H1 (cell line): ENCODE measurements at regions of chr19 and their contacts with region 1.

Region 1: DNA sequence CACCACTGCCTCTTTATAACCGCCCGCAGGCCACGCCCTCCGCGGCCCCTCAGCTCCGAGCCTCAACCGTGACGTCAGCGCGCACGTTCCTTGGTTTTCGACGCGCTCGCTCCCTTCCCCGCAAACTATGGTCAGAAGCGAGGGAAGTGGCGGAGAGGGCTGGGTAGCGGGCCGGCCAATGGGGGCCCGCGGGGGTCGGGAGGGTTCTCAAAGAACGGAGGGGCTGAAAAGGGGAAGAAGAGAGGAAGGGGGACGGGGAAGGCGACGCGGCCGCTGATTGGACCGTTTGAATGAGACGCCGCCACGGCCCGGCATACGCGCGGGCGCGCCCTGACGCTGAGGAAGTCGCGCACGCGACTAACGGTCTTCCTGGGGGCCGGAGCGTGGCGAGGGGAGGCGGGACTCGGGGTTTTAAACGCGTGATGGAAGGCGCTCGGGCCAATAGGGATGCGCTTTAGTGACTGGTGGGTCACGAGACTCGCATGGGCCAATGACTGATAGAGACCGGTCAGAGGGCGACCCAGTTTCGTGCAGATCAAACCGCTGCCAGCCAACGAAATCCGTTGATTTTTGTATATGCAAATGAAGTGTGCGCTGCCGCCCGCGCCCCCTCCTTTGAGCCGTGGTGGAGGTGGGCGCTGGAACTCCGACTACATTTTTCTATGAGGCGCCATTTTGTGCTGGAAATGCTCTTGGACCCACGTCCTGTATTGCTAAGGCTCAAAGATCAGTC is 378 bp upstream of the UBE2S start:
- DNase-seq: peak; percentile 96
- H3K4me3 ChIP-seq: peak overlapping the region; percentile 38 to 98 (median 72)
- H3K27ac ChIP-seq: peak overlapping the region; percentile 94
- H3K4me1 ChIP-seq: peaks cover 0 to 20% (median 13%) of the 10 kb centered on the region in 4 experiments; a peak in 6 of 7 replicates
- H3K27me3 ChIP-seq: peaks cover 0 to 4% (median 1%) of the 10 kb centered on the region in 4 experiments; a peak in 2 of 7 replicates
- CTCF ChIP-seq: no peak
- EP300 ChIP-seq: no peak
- POLR2A ChIP-seq: peak in 1 of 2 experiments; percentile 95; a peak in 2 of 3 replicates
- RAD21 ChIP-seq: peak in 1 of 2 experiments; percentile 5; a peak in 1 of 4 replicates

Region 2: DNA sequence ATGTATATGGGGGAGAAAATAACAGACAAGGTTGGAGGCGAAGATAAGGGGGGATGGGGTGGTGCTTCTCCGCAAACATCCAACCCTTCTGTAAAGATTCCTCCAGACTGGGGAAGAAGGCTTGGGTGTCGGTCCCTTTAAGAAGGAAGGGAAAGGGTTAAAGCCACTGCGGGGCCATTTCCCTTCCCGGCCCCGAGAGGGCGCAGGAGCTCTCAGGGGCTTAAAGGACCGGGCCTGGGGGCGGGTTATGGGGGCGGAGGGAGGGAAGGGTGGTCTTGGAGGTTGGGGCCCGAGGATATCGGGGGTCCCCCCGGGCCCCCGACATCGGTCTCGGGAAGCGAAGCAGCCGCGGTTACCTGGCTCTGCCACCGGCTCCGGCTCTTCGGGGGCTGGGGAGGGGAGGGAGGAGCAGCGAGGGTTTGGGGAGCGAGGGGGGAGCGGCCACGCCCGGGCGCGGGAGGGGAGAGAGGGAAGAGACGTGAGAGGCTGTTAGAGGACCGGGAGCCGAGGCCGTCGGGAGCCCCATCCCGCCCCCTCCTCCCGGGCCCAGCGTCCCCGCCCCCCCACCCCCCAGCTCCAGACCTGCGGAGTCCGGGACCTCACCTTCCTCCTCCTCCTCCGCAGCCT is 261.8 kb before region 1 on chr19:
- CTCF ChIA-PET with region 1: no interaction called
- POLR2A ChIA-PET with region 1: interaction called, 11 read pairs
- DNase-seq: peak in 1 of 2 experiments; percentile 80
- H3K4me3 ChIP-seq: peak overlapping the region; percentile 53 to 83 (median 60)
- H3K27ac ChIP-seq: no peak overlapping the region
- H3K4me1 ChIP-seq: peaks cover 6 to 24% (median 13%) of the 10 kb centered on the region in 4 experiments
- H3K27me3 ChIP-seq: no peaks in the 10 kb centered on the region
- CTCF ChIP-seq: peak; percentile 63 to 80 (median 73)
- EP300 ChIP-seq: peak in 1 of 2 experiments; percentile 36; a peak in 1 of 3 replicates
- POLR2A ChIP-seq: no peak; a peak in 1 of 3 replicates
- RAD21 ChIP-seq: peak; percentile 22 to 45; a peak in 3 of 4 replicates

Region 3: DNA sequence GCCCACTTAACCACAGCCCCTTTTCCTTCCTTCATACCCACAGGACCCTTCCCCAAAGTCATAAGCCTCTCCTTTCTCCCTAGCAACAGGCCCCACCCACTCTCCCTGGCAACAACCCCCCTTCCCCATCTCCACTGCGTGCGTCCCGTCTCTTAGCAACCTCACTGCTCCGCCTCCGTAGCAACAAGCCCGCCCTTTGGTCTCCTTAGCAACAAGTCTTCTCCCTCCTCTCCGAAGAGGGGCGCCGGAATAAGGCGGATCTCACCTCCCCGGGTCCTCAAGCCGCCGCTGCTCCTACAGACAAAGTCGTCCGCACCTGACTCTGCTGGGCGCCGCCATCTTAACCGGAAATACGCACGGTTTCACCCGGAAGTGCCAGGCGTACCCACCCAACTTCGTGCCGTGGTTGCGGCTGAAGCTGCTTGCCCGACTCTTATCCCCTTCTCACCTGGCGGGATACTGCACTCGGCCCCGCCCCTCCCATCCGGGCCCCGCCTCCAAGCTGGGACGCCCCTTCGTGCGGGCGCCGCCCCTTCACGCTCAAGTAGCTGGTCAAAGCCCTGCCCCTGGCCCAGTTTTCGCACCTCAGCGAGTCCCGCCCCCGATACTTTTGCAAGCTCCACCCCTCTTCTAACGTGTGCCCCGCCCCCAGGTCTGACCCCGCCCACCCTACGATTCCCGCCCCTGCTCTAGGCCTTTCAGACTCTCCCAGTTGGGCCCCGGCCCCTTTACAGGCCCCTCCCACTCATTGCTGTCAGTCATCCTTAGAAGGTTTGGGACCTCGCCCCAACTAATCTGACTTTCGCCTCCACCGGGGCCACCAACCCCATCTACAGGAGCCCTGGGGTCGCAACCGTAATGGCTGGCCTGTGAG is 128.0 kb before region 1 on chr19 and contains the start of gene HSPBP1:
- CTCF ChIA-PET with region 1: no interaction called
- POLR2A ChIA-PET with region 1: interaction called, 19 read pairs
- DNase-seq: peak; percentile 99
- H3K4me3 ChIP-seq: peak within 1 kb of the TSS; percentile 71 to 98 (median 90)
- H3K27ac ChIP-seq: peak within 1 kb of the TSS; percentile 85
- H3K4me1 ChIP-seq: peaks cover 3 to 19% (median 7%) of the 10 kb centered on the region in 4 experiments
- H3K27me3 ChIP-seq: no peaks in the 10 kb centered on the region
- CTCF ChIP-seq: no peak
- EP300 ChIP-seq: no peak
- POLR2A ChIP-seq: peak in 1 of 2 experiments; percentile 77; a peak in 2 of 3 replicates
- RAD21 ChIP-seq: no peak
- total RNA-seq, gene HSPBP1: 63.4 and 68.8 TPM in 2 replicates

Region 4: DNA sequence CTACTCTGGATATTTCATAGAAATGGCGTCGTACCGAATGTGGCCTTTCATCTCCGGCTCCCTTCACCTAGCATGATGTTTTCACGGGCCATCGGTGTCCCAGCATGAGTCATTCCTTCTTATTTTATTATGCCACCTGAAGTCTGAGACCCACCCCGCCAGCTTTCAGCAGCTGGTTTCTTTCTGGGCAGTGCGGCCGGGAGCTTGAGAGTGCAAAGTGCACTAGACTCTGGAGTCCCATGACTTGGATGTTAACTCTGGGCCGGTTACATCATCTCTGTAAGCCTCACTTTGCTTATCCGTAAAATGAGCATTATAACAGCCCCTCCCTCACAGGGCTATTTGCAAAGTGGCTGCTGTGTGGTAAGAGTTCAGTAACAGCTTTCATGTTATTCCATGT is 74.1 kb before region 1 on chr19:
- CTCF ChIA-PET with region 1: interaction called, 3 read pairs
- POLR2A ChIA-PET with region 1: interaction called, 30 read pairs
- DNase-seq: no peak
- H3K4me3 ChIP-seq: no peak overlapping the region
- H3K27ac ChIP-seq: no peak overlapping the region
- H3K4me1 ChIP-seq: peaks cover 0 to 7% (median 1%) of the 10 kb centered on the region in 4 experiments; a peak in 2 of 7 replicates
- H3K27me3 ChIP-seq: peaks cover 0 to 3% (median 0%) of the 10 kb centered on the region in 4 experiments; a peak in 1 of 7 replicates
- CTCF ChIP-seq: no peak
- EP300 ChIP-seq: no peak
- POLR2A ChIP-seq: no peak
- RAD21 ChIP-seq: no peak

Region 5: DNA sequence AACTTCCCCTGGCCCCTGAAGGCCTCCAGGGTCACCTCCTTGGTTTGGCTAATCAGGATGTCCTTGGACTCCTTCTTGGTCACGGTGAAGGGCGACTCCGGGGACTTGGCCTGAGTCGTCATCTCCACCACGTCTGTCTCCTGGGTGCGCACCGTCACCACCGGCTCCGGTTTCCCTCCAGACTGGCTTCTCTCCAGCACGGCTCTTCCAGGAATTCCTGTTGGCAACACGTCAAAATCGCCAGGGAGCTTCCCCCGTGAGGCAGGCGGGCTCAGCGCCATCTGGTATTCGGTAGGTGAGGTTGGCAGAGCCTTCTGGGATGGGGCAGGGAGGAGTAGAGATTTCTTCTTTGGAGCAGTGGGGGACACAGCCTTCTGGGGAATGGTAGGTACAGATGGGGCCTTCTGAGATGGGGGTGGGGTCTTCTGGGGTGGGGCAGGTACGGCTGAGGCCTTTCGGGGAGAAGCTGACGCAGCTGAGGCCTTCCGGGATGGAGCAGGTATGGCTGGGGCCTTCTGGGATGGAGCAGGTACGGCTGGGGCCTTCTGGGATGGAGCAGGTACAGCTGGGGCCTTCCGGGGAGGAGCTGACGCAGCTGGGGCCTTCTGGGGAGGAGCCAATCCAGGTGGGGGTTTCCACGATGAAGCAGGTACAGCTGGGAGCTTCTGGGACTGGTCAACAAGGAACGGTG is 48.9 kb before region 1 on chr19:
- CTCF ChIA-PET with region 1: interaction called, 5 read pairs
- POLR2A ChIA-PET with region 1: interaction called, 28 read pairs
- DNase-seq: no peak
- H3K4me3 ChIP-seq: no peak overlapping the region
- H3K27ac ChIP-seq: no peak overlapping the region
- H3K4me1 ChIP-seq: peaks cover 0 to 10% (median 7%) of the 10 kb centered on the region in 4 experiments; a peak in 6 of 7 replicates
- H3K27me3 ChIP-seq: peaks cover 2 to 31% (median 26%) of the 10 kb centered on the region in 4 experiments
- CTCF ChIP-seq: no peak
- EP300 ChIP-seq: no peak
- POLR2A ChIP-seq: no peak
- RAD21 ChIP-seq: no peak

Region 6: DNA sequence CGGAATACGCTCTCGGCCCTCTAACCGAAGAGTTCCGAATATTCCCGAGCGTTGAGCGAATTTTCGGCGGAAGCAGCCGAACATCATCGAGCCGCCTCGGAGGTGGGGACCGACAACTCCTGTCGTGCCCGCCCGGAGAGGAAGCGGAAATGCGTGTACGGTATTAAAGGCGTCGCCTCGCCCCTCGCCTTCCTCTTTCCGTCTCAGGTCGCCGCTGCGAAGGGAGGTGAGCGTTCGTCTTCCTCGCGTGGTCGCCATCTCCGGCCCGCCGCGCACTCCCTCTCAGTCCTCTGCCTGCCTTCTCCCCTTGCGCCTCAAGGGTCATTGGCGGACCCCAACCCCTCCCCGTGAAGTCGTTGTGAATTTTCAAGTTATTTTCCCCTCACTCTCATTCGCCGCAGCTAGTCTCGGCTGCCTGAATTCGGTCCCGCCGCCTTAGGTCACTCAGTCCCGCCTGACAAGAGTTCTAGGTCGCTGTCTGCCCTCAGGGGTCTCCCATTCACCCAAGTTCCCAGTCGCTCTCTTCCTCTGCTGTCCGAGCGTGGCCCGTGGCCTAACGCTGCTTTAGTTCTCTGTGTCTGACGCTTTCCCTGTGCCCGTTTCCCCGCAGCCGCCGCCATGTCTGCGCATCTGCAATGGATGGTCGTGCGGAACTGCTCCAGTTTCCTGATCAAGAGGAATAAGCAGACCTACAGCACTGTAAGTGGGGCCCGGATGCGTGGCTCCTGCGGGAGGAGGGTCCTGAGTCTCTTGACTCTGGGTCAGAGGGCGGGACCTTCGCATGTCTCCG is 22.0 kb before region 1 on chr19 and contains the start of gene RPL28:
- CTCF ChIA-PET with region 1: interaction called, 39 read pairs
- POLR2A ChIA-PET with region 1: interaction called, 874 read pairs
- DNase-seq: peak; percentile 95 to 99
- H3K4me3 ChIP-seq: peak within 1 kb of the TSS; percentile 89 to 97 (median 94)
- H3K27ac ChIP-seq: peak within 1 kb of the TSS; percentile 86
- H3K4me1 ChIP-seq: peaks cover 0 to 47% (median 38%) of the 10 kb centered on the region in 4 experiments; a peak in 6 of 7 replicates
- H3K27me3 ChIP-seq: peaks cover 0 to 6% (median 3%) of the 10 kb centered on the region in 4 experiments; a peak in 3 of 7 replicates
- CTCF ChIP-seq: no peak
- EP300 ChIP-seq: no peak
- POLR2A ChIP-seq: peak; percentile 100
- RAD21 ChIP-seq: no peak
- total RNA-seq, gene RPL28: 2,123 and 2,232 TPM in 2 replicates

Region 7: GRCh38 chr19:55452749-55453346 is 44.9 kb after region 1 on chr19:
- CTCF ChIA-PET with region 1: no interaction called
- POLR2A ChIA-PET with region 1: interaction called, 22 read pairs
- DNase-seq: peak in 1 of 2 experiments; percentile 95
- H3K4me3 ChIP-seq: peak overlapping the region in 2 of 4 experiments; percentile 26 to 69; a peak in 3 of 8 replicates
- H3K27ac ChIP-seq: no peak overlapping the region
- H3K4me1 ChIP-seq: peaks cover 0 to 5% (median 2%) of the 10 kb centered on the region in 4 experiments; a peak in 5 of 7 replicates
- H3K27me3 ChIP-seq: peaks cover 25 to 45% (median 43%) of the 10 kb centered on the region in 4 experiments
- CTCF ChIP-seq: no peak
- EP300 ChIP-seq: peak in 1 of 2 experiments; percentile 94; a peak in 2 of 3 replicates
- POLR2A ChIP-seq: no peak
- RAD21 ChIP-seq: no peak